CD14-positive monocyte (primary cell): ENCODE measurements at regions of chr18 and their contacts with region 1.

Region 1: GRCh38 chr18:40450751-40451150 is 1504.3 kb upstream of the PIK3C3 start:
- DNase-seq: no peak
- H3K4me3 ChIP-seq: no peak overlapping the region
- H3K4me3 Mint-ChIP-seq: no peak overlapping the region
- H3K27ac ChIP-seq: no peak overlapping the region
- H3K27ac Mint-ChIP-seq: no peak overlapping the region
- H3K4me1 ChIP-seq: no peaks in the 10 kb centered on the region
- H3K4me1 Mint-ChIP-seq: no peaks in the 10 kb centered on the region
- H3K27me3 ChIP-seq: no peaks in the 10 kb centered on the region
- H3K27me3 Mint-ChIP-seq: no peaks in the 10 kb centered on the region
- CTCF ChIP-seq: no peak

Region 2: GRCh38 chr18:40523287-40523686 is 72.5 kb after region 1 on chr18:
- intact Hi-C with region 1: loop called in 1 of 2 experiments (anchors 10 kb)
- DNase-seq: no peak
- H3K4me3 ChIP-seq: no peak overlapping the region
- H3K4me3 Mint-ChIP-seq: no peak overlapping the region
- H3K27ac ChIP-seq: no peak overlapping the region
- H3K27ac Mint-ChIP-seq: no peak overlapping the region
- H3K4me1 ChIP-seq: no peaks in the 10 kb centered on the region
- H3K4me1 Mint-ChIP-seq: no peaks in the 10 kb centered on the region
- H3K27me3 ChIP-seq: no peaks in the 10 kb centered on the region
- H3K27me3 Mint-ChIP-seq: no peaks in the 10 kb centered on the region
- CTCF ChIP-seq: no peak

Region 3: GRCh38 chr18:40810371-40810770 is 359.6 kb after region 1 on chr18:
- intact Hi-C with region 1: no loop called
- DNase-seq: no peak
- H3K4me3 ChIP-seq: no peak overlapping the region
- H3K4me3 Mint-ChIP-seq: no peak overlapping the region
- H3K27ac ChIP-seq: no peak overlapping the region
- H3K27ac Mint-ChIP-seq: no peak overlapping the region
- H3K4me1 ChIP-seq: no peaks in the 10 kb centered on the region
- H3K4me1 Mint-ChIP-seq: no peaks in the 10 kb centered on the region
- H3K27me3 ChIP-seq: no peaks in the 10 kb centered on the region
- H3K27me3 Mint-ChIP-seq: no peaks in the 10 kb centered on the region
- CTCF ChIP-seq: no peak